CD4-positive, alpha-beta memory T cell (primary cell): ENCODE measurements at regions of chr16 and their contacts with region 1.

Region 1: GRCh38 chr16:69186642-69187445 is at the start of gene SNTB2:
- DNase-seq: peak; percentile 79 to 89 (median 82)
- H3K4me3 ChIP-seq: peak within 1 kb of the TSS; percentile 73 to 77
- H3K4me3 Mint-ChIP-seq: peak within 1 kb of the TSS; percentile 96 to 100 (median 99)
- H3K27ac ChIP-seq: peak within 1 kb of the TSS; percentile 51
- H3K27ac Mint-ChIP-seq: peak within 1 kb of the TSS; percentile 93 to 100 (median 98)
- H3K4me1 ChIP-seq: peaks cover 54% of the 10 kb centered on the region
- H3K4me1 Mint-ChIP-seq: peaks cover 29 to 61% (median 45%) of the 10 kb centered on the region in 4 donors
- H3K27me3 ChIP-seq: no peaks in the 10 kb centered on the region
- H3K27me3 Mint-ChIP-seq: peaks cover 0 to 2% of the 10 kb centered on the region in 2 donors
- total RNA-seq, gene SNTB2: 15.4 to 21.2 TPM

Region 2: GRCh38 chr16:68528686-68529379 is 658.0 kb before region 1 on chr16:
- CTCF ChIA-PET with region 1: no interaction called
- POLR2A ChIA-PET with region 1: no interaction called
- intact Hi-C with region 1: loop called (anchors 5 kb)
- DNase-seq: peak; percentile 85 to 89 (median 87)
- H3K4me3 ChIP-seq: no peak overlapping the region
- H3K4me3 Mint-ChIP-seq: peak overlapping the region; percentile 76 to 94 (median 90)
- H3K27ac ChIP-seq: no peak overlapping the region
- H3K27ac Mint-ChIP-seq: peak overlapping the region; percentile 52 to 95 (median 86)
- H3K4me1 ChIP-seq: peaks cover 21% of the 10 kb centered on the region
- H3K4me1 Mint-ChIP-seq: peaks cover 12 to 26% (median 21%) of the 10 kb centered on the region in 4 donors
- H3K27me3 ChIP-seq: no peaks in the 10 kb centered on the region
- H3K27me3 Mint-ChIP-seq: no peaks in the 10 kb centered on the region

Region 3: GRCh38 chr16:69132424-69133252 is 54.2 kb before region 1 on chr16 and contains the starts of genes CHTF8 and UTP4:
- CTCF ChIA-PET with region 1: interaction called, 4 read pairs
- POLR2A ChIA-PET with region 1: interaction called, 17 read pairs
- intact Hi-C with region 1: loop called (anchors 2 kb)
- DNase-seq: peak; percentile 86 to 89 (median 87)
- H3K4me3 ChIP-seq: peak within 1 kb of the TSS; percentile 74 to 84
- H3K4me3 Mint-ChIP-seq: peak within 1 kb of the TSS; percentile 93 to 96 (median 95)
- H3K27ac ChIP-seq: peak within 1 kb of the TSS; percentile 90
- H3K27ac Mint-ChIP-seq: peak within 1 kb of the TSS; percentile 92 to 98 (median 96)
- H3K4me1 ChIP-seq: peaks cover 35% of the 10 kb centered on the region
- H3K4me1 Mint-ChIP-seq: peaks cover 36 to 59% (median 50%) of the 10 kb centered on the region in 4 donors
- H3K27me3 ChIP-seq: no peaks in the 10 kb centered on the region
- H3K27me3 Mint-ChIP-seq: no peaks in the 10 kb centered on the region
- total RNA-seq, gene CHTF8: 141 TPM
- total RNA-seq, gene UTP4: 36.9 to 37.0 TPM

Region 4: GRCh38 chr16:69166221-69166833 is 20.5 kb before region 1 on chr16:
- CTCF ChIA-PET with region 1: interaction called, 8 read pairs
- POLR2A ChIA-PET with region 1: interaction called, 28 read pairs
- intact Hi-C with region 1: no loop called
- DNase-seq: peak; percentile 17 to 70 (median 23)
- H3K4me3 ChIP-seq: no peak overlapping the region
- H3K4me3 Mint-ChIP-seq: peak overlapping the region in 7 of 8 donors; percentile 2 to 63 (median 16)
- H3K27ac ChIP-seq: peak overlapping the region; percentile 15
- H3K27ac Mint-ChIP-seq: peak overlapping the region; percentile 45 to 85 (median 76)
- H3K4me1 ChIP-seq: peaks cover 24% of the 10 kb centered on the region
- H3K4me1 Mint-ChIP-seq: peaks cover 23 to 26% (median 25%) of the 10 kb centered on the region in 4 donors
- H3K27me3 ChIP-seq: no peaks in the 10 kb centered on the region
- H3K27me3 Mint-ChIP-seq: no peaks in the 10 kb centered on the region

Region 5: DNA sequence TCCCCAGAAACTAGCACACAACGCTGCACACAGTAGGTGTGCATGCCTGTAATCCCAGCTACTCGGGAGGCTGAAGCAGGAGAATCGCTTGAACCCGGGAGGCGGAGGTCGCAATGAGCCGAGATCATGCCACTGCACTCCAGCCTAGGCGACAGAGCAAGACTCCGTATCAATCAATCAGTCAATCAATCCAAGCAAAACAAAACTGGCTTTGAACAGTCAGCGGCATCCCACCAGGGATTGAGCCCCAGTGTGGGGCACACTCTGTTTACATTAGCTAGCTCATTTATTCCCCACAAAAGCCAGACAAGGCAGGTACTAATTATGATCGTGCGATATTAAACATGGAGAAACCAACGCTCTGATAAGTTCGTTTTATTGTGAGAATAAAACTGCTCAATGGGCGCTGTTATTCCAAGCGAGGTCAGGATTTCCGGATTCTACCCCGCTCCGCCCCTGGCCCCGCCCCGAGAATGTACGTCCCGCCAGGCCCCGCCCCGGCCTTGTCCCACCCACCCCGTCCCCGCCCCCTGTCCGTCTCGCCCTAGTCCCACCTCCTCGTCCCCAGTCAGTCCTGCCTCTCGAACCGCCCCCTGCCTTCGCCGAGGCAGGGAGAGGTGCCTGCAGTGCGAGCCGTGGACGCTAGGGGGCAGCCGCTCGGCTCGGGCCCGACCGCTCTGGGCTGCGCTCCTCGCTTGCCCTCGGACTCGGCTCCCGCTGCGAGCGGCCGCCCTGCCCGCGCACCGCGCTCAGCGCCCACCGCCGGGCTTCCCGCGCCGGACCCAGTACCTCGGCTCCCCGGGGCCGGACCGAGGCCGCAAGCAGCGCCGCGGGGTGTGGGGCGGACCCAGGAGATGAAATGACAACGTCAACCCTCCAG is 124.0 kb after region 1 on chr16 and contains the start of gene VPS4A:
- CTCF ChIA-PET with region 1: interaction called, 3 read pairs
- POLR2A ChIA-PET with region 1: interaction called, 9 read pairs
- intact Hi-C with region 1: loop called (anchors 1 kb)
- DNase-seq: peak; percentile 96 to 99 (median 97)
- H3K4me3 ChIP-seq: peak within 1 kb of the TSS; percentile 70 to 73
- H3K4me3 Mint-ChIP-seq: peak within 1 kb of the TSS; percentile 93 to 99 (median 98)
- H3K27ac ChIP-seq: peak within 1 kb of the TSS; percentile 85
- H3K27ac Mint-ChIP-seq: peak within 1 kb of the TSS; percentile 85 to 98 (median 95)
- H3K4me1 ChIP-seq: peaks cover 28% of the 10 kb centered on the region
- H3K4me1 Mint-ChIP-seq: peaks cover 16 to 36% (median 27%) of the 10 kb centered on the region in 4 donors
- H3K27me3 ChIP-seq: no peaks in the 10 kb centered on the region
- H3K27me3 Mint-ChIP-seq: no peaks in the 10 kb centered on the region
- total RNA-seq, gene VPS4A: 46.7 to 48.3 TPM

Region 6: GRCh38 chr16:69339289-69340108 is 152.7 kb after region 1 on chr16 and contains the starts of genes COG8 and NIP7:
- CTCF ChIA-PET with region 1: no interaction called
- POLR2A ChIA-PET with region 1: interaction called, 3 read pairs
- intact Hi-C with region 1: loop called (anchors 1 kb)
- DNase-seq: peak; percentile 90 to 94 (median 91)
- H3K4me3 ChIP-seq: peak within 1 kb of the TSS; percentile 77 to 97
- H3K4me3 Mint-ChIP-seq: peak within 1 kb of the TSS; percentile 96 to 100 (median 100)
- H3K27ac ChIP-seq: peak within 1 kb of the TSS; percentile 81
- H3K27ac Mint-ChIP-seq: peak within 1 kb of the TSS; percentile 96 to 100 (median 99)
- H3K4me1 ChIP-seq: peaks cover 39% of the 10 kb centered on the region
- H3K4me1 Mint-ChIP-seq: peaks cover 34 to 74% (median 51%) of the 10 kb centered on the region in 4 donors
- H3K27me3 ChIP-seq: no peaks in the 10 kb centered on the region
- H3K27me3 Mint-ChIP-seq: no peaks in the 10 kb centered on the region
- total RNA-seq, gene COG8: 66.0 to 66.1 TPM
- total RNA-seq, gene NIP7: 30.9 to 31.9 TPM